ENCODE measurements at regions of chr6 and their contacts with region 1.

Region 1: GRCh38 chr6:16332175-16332542 is 93.8 kb downstream of the GMPR start:
- DNase-seq: peak; percentile 77 to 85
- ATAC-seq: peak; percentile 89
- H3K4me3 ChIP-seq: no peak overlapping the region
- H3K27ac ChIP-seq: no peak overlapping the region
- H3K4me1 ChIP-seq: no peaks in the 10 kb centered on the region
- H3K27me3 ChIP-seq: no peaks in the 10 kb centered on the region

Region 2: GRCh38 chr6:16286148-16286522 is 46.0 kb before region 1 on chr6:
- intact Hi-C with region 1: loop called in 1 of 2 experiments (anchors 2 kb)
- DNase-seq: no peak
- ATAC-seq: no peak
- H3K4me3 ChIP-seq: no peak overlapping the region
- H3K27ac ChIP-seq: no peak overlapping the region
- H3K4me1 ChIP-seq: no peaks in the 10 kb centered on the region
- H3K27me3 ChIP-seq: no peaks in the 10 kb centered on the region

Region 3: GRCh38 chr6:16409531-16410441 is 77.6 kb after region 1 on chr6:
- intact Hi-C with region 1: loop called (anchors 2 to 5 kb)
- DNase-seq: peak in 1 of 2 donors; percentile 78
- ATAC-seq: peak; percentile 69
- H3K4me3 ChIP-seq: no peak overlapping the region
- H3K27ac ChIP-seq: no peak overlapping the region
- H3K4me1 ChIP-seq: peaks cover 0 to 12% of the 10 kb centered on the region in 2 donors
- H3K27me3 ChIP-seq: no peaks in the 10 kb centered on the region

Region 4: GRCh38 chr6:16494793-16495192 is 162.6 kb after region 1 on chr6:
- intact Hi-C with region 1: loop called in 1 of 2 experiments (anchors 5 kb)
- DNase-seq: no peak
- ATAC-seq: no peak
- H3K4me3 ChIP-seq: no peak overlapping the region
- H3K27ac ChIP-seq: no peak overlapping the region
- H3K4me1 ChIP-seq: peaks cover 0 to 9% of the 10 kb centered on the region in 2 donors
- H3K27me3 ChIP-seq: no peaks in the 10 kb centered on the region

Region 5: DNA sequence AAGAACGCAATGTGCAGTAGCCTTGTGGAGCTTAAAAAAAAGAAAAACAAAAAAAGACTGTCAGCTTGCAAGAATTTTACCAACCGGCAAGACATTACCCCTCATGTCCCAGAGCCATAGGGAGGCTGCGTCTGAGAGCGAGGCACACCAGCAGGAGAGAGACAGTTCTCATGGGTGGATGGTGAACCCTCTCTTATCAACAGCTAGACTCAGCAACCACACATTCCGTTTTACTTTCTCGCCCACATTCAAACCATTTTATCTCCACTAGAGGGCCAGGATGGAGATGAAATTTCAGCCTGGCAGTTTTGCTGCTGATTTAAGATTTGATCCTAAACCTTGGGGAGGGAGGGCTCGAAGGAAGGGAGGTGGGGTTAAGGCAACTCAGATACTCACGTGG is 182.1 kb after region 1 on chr6:
- intact Hi-C with region 1: loop called (anchors 5 kb)
- DNase-seq: no peak
- ATAC-seq: peak; percentile 43
- H3K4me3 ChIP-seq: no peak overlapping the region
- H3K27ac ChIP-seq: no peak overlapping the region
- H3K4me1 ChIP-seq: peaks cover 7 to 11% of the 10 kb centered on the region in 2 donors
- H3K27me3 ChIP-seq: no peaks in the 10 kb centered on the region

Region 6: DNA sequence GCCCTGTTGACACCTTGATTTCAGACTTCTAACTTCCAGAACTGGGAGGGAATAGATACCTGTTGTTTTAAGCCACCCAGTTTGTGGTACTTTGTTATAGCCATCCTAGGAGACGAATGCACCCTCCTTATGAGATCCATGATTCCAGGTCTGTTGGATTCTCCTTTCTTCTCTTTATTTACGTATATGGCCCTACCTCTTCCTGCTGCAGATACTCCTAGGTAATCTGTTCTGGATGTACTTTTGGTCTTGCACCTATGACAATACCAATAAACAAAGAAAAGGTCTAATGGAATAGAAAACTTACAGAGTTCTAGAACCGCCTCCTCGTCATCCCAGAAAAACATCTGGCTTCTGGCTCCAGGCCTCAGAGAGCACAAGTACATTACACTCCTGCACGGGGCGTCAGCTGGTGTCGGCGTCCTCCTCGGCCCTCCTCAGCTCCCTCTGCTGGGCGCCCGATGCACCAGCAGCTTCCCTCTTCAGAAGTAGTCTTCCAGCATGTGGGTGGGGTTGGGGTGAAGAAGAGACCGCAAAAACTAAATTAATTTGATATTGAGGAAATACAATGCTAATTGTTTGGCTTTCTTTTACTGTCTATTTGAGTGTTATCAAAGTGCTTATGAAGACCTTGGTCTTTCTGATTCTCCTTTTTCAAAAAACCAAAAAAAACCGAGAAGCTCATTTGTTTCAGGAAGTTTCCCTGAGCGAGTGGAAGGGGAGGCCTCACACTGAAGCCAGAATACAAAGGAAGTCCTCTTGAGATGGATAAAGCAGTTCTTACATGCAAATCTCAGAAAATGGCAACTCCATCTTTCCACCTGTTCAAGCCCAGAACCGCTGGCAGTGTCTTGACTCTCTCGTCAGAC is 438.8 kb after region 1 on chr6:
- intact Hi-C with region 1: loop called in 1 of 2 experiments (anchors 5 kb)
- DNase-seq: peak; percentile 85 to 91
- ATAC-seq: peak; percentile 84
- H3K4me3 ChIP-seq: no peak overlapping the region
- H3K27ac ChIP-seq: peak overlapping the region in 1 of 2 donors; percentile 69
- H3K4me1 ChIP-seq: peaks cover 2 to 5% of the 10 kb centered on the region in 2 donors
- H3K27me3 ChIP-seq: no peaks in the 10 kb centered on the region

Region 7: GRCh38 chr6:16964553-16965501 is 632.7 kb after region 1 on chr6:
- intact Hi-C with region 1: loop called in 1 of 2 experiments (anchors 10 kb)
- DNase-seq: peak; percentile 73 to 87
- ATAC-seq: peak; percentile 87
- H3K4me3 ChIP-seq: no peak overlapping the region
- H3K27ac ChIP-seq: no peak overlapping the region
- H3K4me1 ChIP-seq: no peaks in the 10 kb centered on the region
- H3K27me3 ChIP-seq: peaks cover 0 to 2% of the 10 kb centered on the region in 2 donors